ENCODE measurements at regions of chr10 and their contacts with region 1.

Region 1: DNA sequence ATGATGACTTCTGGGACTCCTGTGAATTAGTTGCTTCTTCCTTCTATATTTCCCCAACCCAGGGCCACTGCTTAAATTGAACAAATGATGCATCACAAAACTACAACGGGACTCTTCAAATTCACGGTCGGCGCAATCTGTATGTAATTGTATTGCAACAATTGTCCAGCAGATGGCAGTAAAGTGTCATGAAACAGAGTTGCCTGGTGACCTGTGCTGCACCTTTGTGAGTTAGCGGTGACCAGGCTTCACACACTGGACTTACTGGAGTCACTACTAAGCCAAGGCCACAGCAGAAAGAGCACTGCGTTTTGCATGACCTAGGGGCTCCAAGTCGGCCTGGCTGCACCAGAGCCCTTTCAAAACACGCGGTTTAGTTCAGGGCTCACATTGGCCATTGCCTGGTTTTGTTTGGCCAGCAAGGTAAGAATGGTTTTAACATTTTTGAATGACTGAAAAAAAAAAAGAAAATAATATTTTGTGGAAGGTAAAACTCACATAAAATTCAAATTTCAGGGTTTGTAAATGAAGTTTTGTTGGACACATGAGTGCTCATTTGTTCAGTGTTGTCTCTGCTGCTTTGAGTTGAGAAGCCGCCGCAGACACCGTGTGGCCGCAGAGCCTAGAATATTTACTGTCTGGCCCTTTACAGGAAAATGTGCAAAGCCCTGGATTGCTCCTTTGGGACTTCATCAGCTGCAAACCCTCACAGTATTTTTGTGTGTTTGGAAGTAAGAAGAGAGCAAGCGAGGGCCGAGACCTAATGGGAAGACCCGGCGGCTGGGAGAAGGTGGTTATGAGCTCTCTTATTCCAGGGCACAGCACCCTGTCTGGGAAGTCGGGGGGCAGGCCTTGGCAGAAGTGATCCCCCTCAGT is 23.2 kb upstream of the ZNF32 start:
- DNase-seq: peak; percentile 79 to 81
- H3K4me3 ChIP-seq: no peak overlapping the region
- H3K4me3 Mint-ChIP-seq: no peak overlapping the region
- H3K27ac Mint-ChIP-seq: no peak overlapping the region
- H3K4me1 ChIP-seq: no peaks in the 10 kb centered on the region
- H3K4me1 Mint-ChIP-seq: peaks cover 5% of the 10 kb centered on the region
- H3K27me3 ChIP-seq: no peaks in the 10 kb centered on the region
- H3K27me3 Mint-ChIP-seq: peaks cover 27% of the 10 kb centered on the region
- CTCF ChIP-seq: peak; percentile 68 to 92

Region 2: DNA sequence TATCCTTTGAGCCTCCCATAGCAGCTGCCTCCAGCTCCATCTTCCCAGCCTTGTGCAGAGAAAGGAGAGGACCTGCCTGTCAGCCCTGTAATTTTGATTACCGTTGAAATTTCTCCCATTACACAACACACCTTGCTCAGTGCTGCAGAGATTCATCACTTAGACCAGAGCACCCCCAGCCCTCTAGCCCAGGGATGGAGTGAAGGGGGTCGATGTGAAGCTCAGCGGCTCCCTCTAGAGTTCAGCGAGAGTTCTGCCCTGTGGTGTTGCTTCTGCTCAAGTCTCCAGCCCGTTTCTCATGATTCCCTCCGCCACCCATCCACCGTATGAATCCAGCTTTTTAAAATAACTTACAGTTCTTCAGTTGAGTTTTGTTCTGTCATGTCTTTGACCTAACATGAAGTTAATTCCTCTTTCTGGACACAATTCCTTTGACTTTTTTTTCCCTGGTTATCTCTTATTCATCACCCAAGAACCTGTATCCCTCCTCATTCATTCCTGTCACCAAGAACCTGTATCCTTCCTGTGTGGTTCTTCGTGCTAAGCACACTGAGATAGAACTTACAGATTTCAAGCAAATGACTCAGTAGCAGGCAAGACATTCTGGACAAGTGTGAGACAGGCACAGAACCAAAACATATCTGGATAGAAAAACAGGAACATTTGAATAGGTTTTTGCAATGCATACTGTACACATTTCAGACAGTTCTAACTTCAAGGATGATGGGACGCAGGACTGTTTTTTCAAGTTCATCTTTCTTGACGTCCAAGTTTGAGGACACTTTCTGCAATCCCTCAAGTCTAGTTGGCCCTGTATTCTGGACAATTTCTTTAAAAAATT is 11.8 kb after region 1 on chr10:
- CTCF ChIA-PET with region 1: interaction called, 8 read pairs
- POLR2A ChIA-PET with region 1: no interaction called
- intact Hi-C with region 1: loop called (anchors 1 kb)
- DNase-seq: peak in 1 of 2 experiments; percentile 49
- H3K4me3 ChIP-seq: no peak overlapping the region
- H3K4me3 Mint-ChIP-seq: no peak overlapping the region
- H3K27ac Mint-ChIP-seq: no peak overlapping the region
- H3K4me1 ChIP-seq: no peaks in the 10 kb centered on the region
- H3K4me1 Mint-ChIP-seq: no peaks in the 10 kb centered on the region
- H3K27me3 ChIP-seq: no peaks in the 10 kb centered on the region; the same call in 1 of the 2 replicates
- H3K27me3 Mint-ChIP-seq: peaks cover 33% of the 10 kb centered on the region
- CTCF ChIP-seq: peak; percentile 68 to 77

Region 3: GRCh38 chr10:44030143-44030542 is 358.2 kb after region 1 on chr10:
- CTCF ChIA-PET with region 1: no interaction called
- POLR2A ChIA-PET with region 1: no interaction called
- intact Hi-C with region 1: loop called (anchors 1 kb)
- DNase-seq: peak in 1 of 2 experiments; percentile 18
- H3K4me3 ChIP-seq: no peak overlapping the region
- H3K4me3 Mint-ChIP-seq: no peak overlapping the region
- H3K27ac Mint-ChIP-seq: no peak overlapping the region
- H3K4me1 ChIP-seq: no peaks in the 10 kb centered on the region
- H3K4me1 Mint-ChIP-seq: no peaks in the 10 kb centered on the region
- H3K27me3 ChIP-seq: no peaks in the 10 kb centered on the region
- H3K27me3 Mint-ChIP-seq: peaks cover 30% of the 10 kb centered on the region
- CTCF ChIP-seq: peak in 1 of 2 experiments; percentile 58

Region 4: GRCh38 chr10:44857363-44858016 is 1185.6 kb after region 1 on chr10:
- CTCF ChIA-PET with region 1: no interaction called
- POLR2A ChIA-PET with region 1: no interaction called
- intact Hi-C with region 1: loop called (anchors 1 kb)
- DNase-seq: peak in 1 of 2 experiments; percentile 78
- H3K4me3 ChIP-seq: no peak overlapping the region
- H3K4me3 Mint-ChIP-seq: no peak overlapping the region
- H3K27ac Mint-ChIP-seq: no peak overlapping the region
- H3K4me1 ChIP-seq: no peaks in the 10 kb centered on the region
- H3K4me1 Mint-ChIP-seq: no peaks in the 10 kb centered on the region
- H3K27me3 ChIP-seq: 0 out of 2 replicates have a peak, but pooled peaks cover 2% of the 10 kb centered on the region
- H3K27me3 Mint-ChIP-seq: peaks cover 8% of the 10 kb centered on the region
- CTCF ChIP-seq: peak; percentile 99

Region 5: DNA sequence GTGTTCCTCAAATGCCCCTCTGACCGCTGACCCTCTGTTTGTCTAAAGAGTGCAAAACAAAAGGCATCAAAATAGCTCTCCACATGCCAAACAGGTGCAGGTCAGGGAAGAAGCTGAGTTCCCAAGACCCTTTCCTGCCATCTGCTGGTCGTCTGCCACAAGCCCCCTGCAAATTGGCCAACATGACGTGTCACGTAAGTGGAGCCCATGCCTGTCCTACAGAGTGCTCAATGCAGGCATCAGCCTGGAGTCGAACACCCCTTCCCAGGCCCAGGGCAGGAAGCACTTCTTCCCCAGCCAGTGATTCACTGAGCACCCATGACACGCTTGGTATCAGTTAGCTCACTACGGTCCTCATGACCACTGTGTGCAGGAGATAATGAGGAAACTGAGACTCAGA is 1253.3 kb after region 1 on chr10:
- CTCF ChIA-PET with region 1: no interaction called
- POLR2A ChIA-PET with region 1: no interaction called
- intact Hi-C with region 1: loop called (anchors 1 kb)
- DNase-seq: peak; percentile 73 to 78
- H3K4me3 ChIP-seq: no peak overlapping the region
- H3K4me3 Mint-ChIP-seq: no peak overlapping the region
- H3K27ac Mint-ChIP-seq: no peak overlapping the region
- H3K4me1 ChIP-seq: peaks cover 10% of the 10 kb centered on the region; the same call in 1 of the 2 replicates
- H3K4me1 Mint-ChIP-seq: no peaks in the 10 kb centered on the region
- H3K27me3 ChIP-seq: no peaks in the 10 kb centered on the region
- H3K27me3 Mint-ChIP-seq: peaks cover 13% of the 10 kb centered on the region
- CTCF ChIP-seq: peak; percentile 69 to 89